ENCODE measurements at regions of chr12 and their contacts with region 1.

Region 1: DNA sequence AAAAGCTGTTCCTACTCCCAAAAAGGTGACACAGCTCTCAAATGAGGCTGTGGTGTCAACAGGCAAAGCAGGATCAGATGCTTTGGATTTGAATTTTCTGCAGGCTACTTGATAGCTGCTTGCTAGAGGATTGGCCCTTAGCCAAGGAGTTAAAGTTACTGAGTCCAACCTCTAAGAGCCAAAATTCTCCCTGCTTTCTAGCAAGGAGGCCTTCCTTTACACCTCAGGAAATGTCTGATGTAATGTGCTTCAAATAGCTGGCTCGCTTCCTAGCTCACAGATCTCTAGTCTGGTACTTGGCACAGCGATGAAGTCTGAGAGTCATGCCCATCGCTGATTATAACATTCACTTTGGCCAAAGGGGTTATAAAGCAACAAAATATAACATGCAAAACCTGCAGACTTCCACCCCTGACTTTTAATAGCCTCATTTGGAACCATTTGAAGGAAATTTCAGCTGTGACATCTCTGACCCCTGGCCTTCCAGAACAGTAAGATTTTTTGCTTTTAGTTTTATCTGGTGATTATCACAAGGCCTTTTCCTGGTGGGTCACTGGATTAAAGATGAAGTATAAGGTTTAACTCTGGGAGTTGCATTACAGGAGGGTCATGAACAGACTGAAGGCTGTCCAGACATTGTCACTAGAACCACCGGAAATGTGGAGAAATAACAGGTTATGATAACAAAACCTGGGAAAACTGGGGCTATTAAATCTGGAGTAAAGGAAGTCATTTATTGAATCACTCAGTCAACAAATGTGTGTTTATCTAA is 189.7 kb downstream of the EPS8 start:
- DNase-seq: peak; percentile 87
- H3K4me3 ChIP-seq: no peak overlapping the region
- H3K27ac ChIP-seq: peak overlapping the region; percentile 60
- H3K4me1 ChIP-seq: peaks cover 28% of the 10 kb centered on the region
- H3K27me3 ChIP-seq: peaks cover 0 to 2% of the 10 kb centered on the region in 2 experiments
- CTCF ChIP-seq: no peak
- POLR2A ChIP-seq: no peak

Region 2: GRCh38 chr12:15629108-15629507 is 29.7 kb after region 1 on chr12:
- CTCF ChIA-PET with region 1: interaction called, 6 read pairs
- POLR2A ChIA-PET with region 1: no interaction called
- dilution Hi-C with region 1: no loop called
- intact Hi-C with region 1: loop called (anchors 1 kb)
- DNase-seq: peak; percentile 90
- H3K4me3 ChIP-seq: no peak overlapping the region
- H3K27ac ChIP-seq: peak overlapping the region; percentile 94
- H3K4me1 ChIP-seq: peaks cover 54% of the 10 kb centered on the region
- H3K27me3 ChIP-seq: no peaks in the 10 kb centered on the region
- CTCF ChIP-seq: no peak
- POLR2A ChIP-seq: no peak

Region 3: DNA sequence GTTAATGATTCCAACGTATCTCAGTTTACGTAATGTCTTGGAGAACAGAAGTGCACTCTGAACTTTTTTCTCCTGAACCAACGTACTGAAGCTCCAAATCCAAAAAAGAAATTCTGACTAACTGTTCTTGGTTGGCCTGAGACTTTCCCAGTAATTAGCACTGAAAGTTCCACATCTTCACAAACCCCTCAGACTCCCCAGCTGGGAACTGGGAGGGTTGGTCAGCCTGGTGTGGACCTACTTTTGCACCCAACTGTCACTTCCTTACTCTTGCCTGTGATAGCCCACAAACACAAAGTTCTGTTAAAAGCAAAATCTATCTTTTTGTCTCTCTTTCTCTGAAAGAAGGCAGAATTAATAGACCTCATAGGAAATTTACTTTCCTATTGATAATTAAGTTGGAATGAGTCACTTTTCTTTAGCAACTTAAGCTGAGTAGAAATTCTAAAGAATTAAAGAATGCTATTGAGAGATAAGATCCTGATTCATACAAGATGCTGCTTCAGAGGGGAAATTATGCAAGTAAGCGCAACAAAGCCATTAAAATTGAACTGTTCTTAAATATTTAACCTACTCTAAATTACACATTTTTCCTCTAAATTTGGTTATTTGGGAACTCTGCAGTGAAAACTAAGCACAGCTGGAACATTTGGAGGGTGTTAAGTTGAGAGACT is 34.7 kb after region 1 on chr12:
- CTCF ChIA-PET with region 1: interaction called, 6 read pairs
- POLR2A ChIA-PET with region 1: no interaction called
- dilution Hi-C with region 1: no loop called
- intact Hi-C with region 1: loop called (anchors 1 kb)
- DNase-seq: peak; percentile 53
- H3K4me3 ChIP-seq: no peak overlapping the region
- H3K27ac ChIP-seq: peak overlapping the region; percentile 23
- H3K4me1 ChIP-seq: peaks cover 70% of the 10 kb centered on the region
- H3K27me3 ChIP-seq: no peaks in the 10 kb centered on the region
- CTCF ChIP-seq: no peak
- POLR2A ChIP-seq: no peak